Activated CD8-positive, alpha-beta T cell treated with anti-CD3 and anti-CD28 coated beads for 36 hours (primary cell): ENCODE measurements at regions of chr3 and their contacts with region 1.

Region 1: GRCh38 chr3:138417559-138417982 is 16.8 kb upstream of the ESYT3 start:
- DNase-seq: peak; percentile 77
- ATAC-seq: peak; percentile 87
- H3K4me3 Mint-ChIP-seq: no peak overlapping the region
- H3K27ac Mint-ChIP-seq: no peak overlapping the region
- H3K4me1 Mint-ChIP-seq: peaks cover 4% of the 10 kb centered on the region
- H3K27me3 Mint-ChIP-seq: peaks cover 5% of the 10 kb centered on the region
- CTCF ChIP-seq: peak; percentile 80

Region 2: DNA sequence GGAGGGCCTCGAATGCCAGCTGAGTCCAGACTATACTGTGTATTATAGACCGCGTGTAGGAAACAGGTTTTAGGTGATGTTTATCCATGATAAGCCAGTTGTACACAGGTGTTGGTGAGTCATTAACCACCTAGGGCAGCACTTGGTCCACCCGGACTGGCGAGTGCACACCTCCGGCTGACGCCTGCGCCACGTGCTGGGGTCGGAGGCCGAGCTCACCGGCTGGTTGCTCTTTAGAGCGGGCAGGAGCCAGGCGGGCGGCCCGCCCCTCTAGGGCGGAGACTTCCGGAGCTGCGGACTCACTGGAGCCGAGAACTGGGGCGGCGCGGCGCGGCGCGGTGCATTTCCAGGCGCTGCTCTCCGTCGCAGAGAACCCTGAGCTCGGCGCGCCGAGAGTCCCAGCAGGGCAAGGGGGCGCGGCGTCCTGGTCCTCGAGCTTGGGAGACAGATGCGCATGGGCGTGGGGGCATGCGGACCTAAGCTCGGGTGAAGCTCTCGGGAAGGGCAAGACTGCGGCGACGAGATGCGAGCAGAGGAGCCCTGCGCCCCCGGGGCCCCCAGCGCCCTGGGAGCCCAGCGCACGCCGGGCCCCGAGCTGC is 16.8 kb after region 1 on chr3 and contains the start of gene ESYT3:
- CTCF ChIA-PET with region 1: interaction called, 18 read pairs
- POLR2A ChIA-PET with region 1: interaction called, 4 read pairs
- intact Hi-C with region 1: no loop called
- DNase-seq: peak; percentile 77
- ATAC-seq: peak; percentile 98
- H3K4me3 Mint-ChIP-seq: peak within 1 kb of the TSS; percentile 67
- H3K27ac Mint-ChIP-seq: no peak within 1 kb of the TSS
- H3K4me1 Mint-ChIP-seq: peaks cover 8% of the 10 kb centered on the region
- H3K27me3 Mint-ChIP-seq: peaks cover 42% of the 10 kb centered on the region
- CTCF ChIP-seq: no peak
- total RNA-seq, gene ESYT3: 0.09 to 0.16 TPM